ENCODE measurements at regions of chr5 and their contacts with region 1.

Region 1: DNA sequence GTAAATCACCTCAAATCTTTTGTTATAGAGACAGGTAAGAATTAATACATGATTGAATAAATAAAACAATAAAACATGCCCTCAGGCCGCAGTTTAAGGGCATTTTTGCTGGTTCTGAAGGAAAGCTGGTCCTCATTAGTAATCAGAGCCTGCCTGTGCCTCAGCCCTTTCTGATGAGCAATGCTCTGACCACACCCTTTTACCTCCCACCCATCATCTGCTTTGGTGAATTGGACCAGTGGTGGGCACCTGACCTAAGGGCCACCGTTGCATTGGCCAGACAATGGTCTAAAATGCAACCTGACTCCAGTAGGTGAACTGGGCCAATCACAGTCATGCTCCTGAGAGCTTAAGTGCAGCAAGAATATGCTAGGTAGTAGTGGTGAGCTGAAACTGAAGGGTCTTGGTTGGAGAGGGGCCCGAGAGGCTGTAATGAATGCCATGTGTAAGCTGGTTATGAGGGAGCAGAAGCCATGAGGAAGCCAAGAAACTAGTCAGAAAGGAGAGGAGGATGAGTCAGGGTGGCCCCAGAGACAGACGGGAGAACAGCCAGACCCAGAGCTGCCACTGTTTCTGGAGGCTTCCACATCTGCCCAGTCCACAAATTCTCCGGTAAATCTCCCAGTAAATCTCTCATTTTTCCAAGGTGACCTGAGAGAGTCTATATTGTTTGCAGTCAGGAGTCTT is 45.5 kb upstream of the ZSWIM6 start:
- DNase-seq: no peak
- H3K4me3 ChIP-seq: no peak overlapping the region
- H3K27ac ChIP-seq: no peak overlapping the region
- H3K4me1 ChIP-seq: peaks cover 0 to 3% (median 0%) of the 10 kb centered on the region in 4 experiments; a peak in 1 of 7 replicates
- H3K27me3 ChIP-seq: no peaks in the 10 kb centered on the region
- CTCF ChIP-seq: no peak
- EP300 ChIP-seq: no peak
- POLR2A ChIP-seq: no peak
- RAD21 ChIP-seq: no peak

Region 2: DNA sequence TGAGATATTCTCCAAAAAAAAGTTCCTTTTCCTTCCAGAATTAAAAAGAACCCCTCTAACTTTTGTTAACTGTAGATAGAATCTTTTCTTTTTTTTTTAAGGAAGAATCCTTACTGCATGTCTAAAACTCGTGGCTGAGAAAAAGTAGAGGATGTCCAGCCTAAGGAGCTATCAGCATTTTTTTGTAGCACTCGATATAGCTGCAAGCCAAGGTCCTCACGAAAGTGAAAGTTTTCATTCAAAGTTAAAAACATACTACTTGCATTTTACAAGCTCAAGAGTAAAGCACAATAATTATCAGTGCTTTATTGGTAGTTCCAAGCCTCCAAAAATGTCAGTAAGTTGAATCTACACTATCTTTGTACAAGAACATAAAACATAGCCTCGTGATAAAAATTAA is 16.8 kb after region 1 on chr5:
- CTCF ChIA-PET with region 1: interaction called, 11 read pairs
- POLR2A ChIA-PET with region 1: no interaction called
- DNase-seq: no peak
- H3K4me3 ChIP-seq: no peak overlapping the region
- H3K27ac ChIP-seq: no peak overlapping the region
- H3K4me1 ChIP-seq: peaks cover 0 to 8% (median 3%) of the 10 kb centered on the region in 4 experiments; a peak in 4 of 7 replicates
- H3K27me3 ChIP-seq: no peaks in the 10 kb centered on the region
- CTCF ChIP-seq: no peak
- EP300 ChIP-seq: no peak
- POLR2A ChIP-seq: no peak
- RAD21 ChIP-seq: no peak

Measured in H1 (cell line).